Naive thymus-derived CD4-positive, alpha-beta T cell (primary cell): ENCODE measurements at regions of chr6 and their contacts with region 1.

Region 1: GRCh38 chr6:131627724-131628682 is at the start of gene MED23:
- DNase-seq: peak; percentile 85 to 98 (median 94)
- ATAC-seq: peak; percentile 99
- H3K4me3 ChIP-seq: peak within 1 kb of the TSS; percentile 92
- H3K4me3 Mint-ChIP-seq: peak within 1 kb of the TSS; percentile 95 to 100 (median 98)
- H3K27ac ChIP-seq: peak within 1 kb of the TSS; percentile 75
- H3K27ac Mint-ChIP-seq: peak within 1 kb of the TSS; percentile 93 to 96 (median 95)
- H3K4me1 ChIP-seq: peaks cover 16 to 18% of the 10 kb centered on the region in 2 donors
- H3K4me1 Mint-ChIP-seq: peaks cover 20 to 51% (median 46%) of the 10 kb centered on the region in 7 donors
- H3K27me3 ChIP-seq: no peaks in the 10 kb centered on the region
- H3K27me3 Mint-ChIP-seq: peaks cover 0 to 2% (median 0%) of the 10 kb centered on the region in 5 donors
- total RNA-seq, gene MED23: 35.7 to 59.1 (median 55.4) TPM

Region 2: DNA sequence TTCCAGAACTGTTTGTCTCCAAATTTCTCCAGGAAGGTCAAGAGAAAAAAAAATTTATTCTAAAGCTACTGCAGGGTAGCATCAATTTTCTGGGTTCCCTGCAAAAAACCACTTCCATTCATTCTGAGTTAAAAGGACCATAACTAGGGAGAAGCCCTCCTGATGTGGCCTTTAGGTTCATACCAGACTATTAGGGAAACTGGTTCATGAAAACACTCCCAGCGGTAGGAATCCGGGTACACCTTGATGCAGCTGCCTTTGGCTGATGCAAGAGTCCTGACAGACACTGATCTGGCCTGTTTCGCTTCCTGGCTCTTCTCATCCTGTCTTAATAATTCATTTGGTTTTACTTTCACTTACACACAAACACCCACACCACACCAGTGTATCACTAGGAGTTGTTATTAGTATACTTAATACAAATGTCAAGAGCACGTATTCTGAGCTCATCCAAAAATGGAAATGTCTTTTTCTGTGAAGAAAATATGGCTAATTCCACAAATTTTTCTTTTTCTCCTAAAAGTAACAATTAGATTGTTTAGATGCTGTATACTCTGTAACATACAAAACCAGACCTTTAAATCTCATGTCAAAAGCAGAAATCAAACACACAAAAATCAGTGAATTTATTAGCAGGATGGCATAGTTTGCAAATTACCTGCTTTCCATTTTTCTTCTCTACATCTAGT is 1879.6 kb before region 1 on chr6:
- CTCF ChIA-PET with region 1: no interaction called
- POLR2A ChIA-PET with region 1: no interaction called
- intact Hi-C with region 1: loop called in 1 of 2 experiments (anchors 5 kb)
- DNase-seq: peak in 8 of 9 donors; percentile 35 to 61 (median 42)
- ATAC-seq: peak; percentile 85
- H3K4me3 ChIP-seq: peak overlapping the region; percentile 43
- H3K4me3 Mint-ChIP-seq: peak overlapping the region; percentile 31 to 86 (median 79)
- H3K27ac ChIP-seq: peak overlapping the region; percentile 69
- H3K27ac Mint-ChIP-seq: peak overlapping the region; percentile 82 to 97 (median 89)
- H3K4me1 ChIP-seq: peaks cover 44 to 49% of the 10 kb centered on the region in 2 donors
- H3K4me1 Mint-ChIP-seq: peaks cover 40 to 81% (median 71%) of the 10 kb centered on the region in 7 donors
- H3K27me3 ChIP-seq: no peaks in the 10 kb centered on the region
- H3K27me3 Mint-ChIP-seq: no peaks in the 10 kb centered on the region

Region 3: GRCh38 chr6:131063028-131063763 is 564.8 kb before region 1 on chr6 and contains the start of gene EPB41L2:
- CTCF ChIA-PET with region 1: no interaction called
- POLR2A ChIA-PET with region 1: no interaction called
- intact Hi-C with region 1: loop called (anchors 1 to 2 kb)
- DNase-seq: peak; percentile 63 to 87 (median 73)
- ATAC-seq: peak; percentile 94
- H3K4me3 ChIP-seq: peak within 1 kb of the TSS; percentile 63
- H3K4me3 Mint-ChIP-seq: peak within 1 kb of the TSS; percentile 83 to 93 (median 90)
- H3K27ac ChIP-seq: peak within 1 kb of the TSS; percentile 67
- H3K27ac Mint-ChIP-seq: peak within 1 kb of the TSS; percentile 20 to 92 (median 77)
- H3K4me1 ChIP-seq: peaks cover 0 to 6% of the 10 kb centered on the region in 2 donors
- H3K4me1 Mint-ChIP-seq: peaks cover 8 to 27% (median 25%) of the 10 kb centered on the region in 7 donors
- H3K27me3 ChIP-seq: no peaks in the 10 kb centered on the region
- H3K27me3 Mint-ChIP-seq: peaks cover 0 to 35% (median 0%) of the 10 kb centered on the region in 5 donors
- total RNA-seq, gene EPB41L2: 10.3 to 26.9 (median 20.9) TPM

Region 4: DNA sequence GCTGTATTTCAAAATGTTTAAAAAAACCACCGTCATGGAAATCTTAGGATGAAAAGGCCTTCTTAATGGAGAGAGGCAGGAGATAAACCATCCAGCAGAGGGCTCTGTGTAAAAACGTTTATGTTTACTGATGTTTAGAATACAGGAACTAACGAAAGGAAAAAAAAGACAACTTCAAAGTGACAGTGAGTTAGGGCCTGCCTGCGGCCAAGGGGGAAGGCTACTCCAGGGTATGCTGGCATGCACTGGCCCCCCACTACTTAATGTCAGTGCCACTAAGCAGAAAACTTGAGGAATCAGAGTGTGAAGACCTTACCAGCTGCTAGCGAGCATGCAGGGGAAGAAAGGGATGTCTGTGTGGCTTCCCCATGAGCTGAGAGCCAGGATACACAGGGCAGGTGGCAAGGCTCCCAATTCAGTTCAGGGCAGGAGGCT is 445.0 kb before region 1 on chr6:
- CTCF ChIA-PET with region 1: interaction called, 11 read pairs
- POLR2A ChIA-PET with region 1: interaction called, 10 read pairs
- intact Hi-C with region 1: loop called (anchors 1 to 5 kb)
- DNase-seq: peak in 8 of 9 donors; percentile 6 to 57 (median 47)
- ATAC-seq: peak; percentile 83
- H3K4me3 ChIP-seq: no peak overlapping the region
- H3K4me3 Mint-ChIP-seq: peak overlapping the region; percentile 10 to 85 (median 72)
- H3K27ac ChIP-seq: no peak overlapping the region
- H3K27ac Mint-ChIP-seq: peak overlapping the region; percentile 86 to 98 (median 94)
- H3K4me1 ChIP-seq: peaks cover 0 to 8% of the 10 kb centered on the region in 2 donors
- H3K4me1 Mint-ChIP-seq: peaks cover 5 to 22% (median 17%) of the 10 kb centered on the region in 7 donors
- H3K27me3 ChIP-seq: no peaks in the 10 kb centered on the region
- H3K27me3 Mint-ChIP-seq: no peaks in the 10 kb centered on the region

Region 5: DNA sequence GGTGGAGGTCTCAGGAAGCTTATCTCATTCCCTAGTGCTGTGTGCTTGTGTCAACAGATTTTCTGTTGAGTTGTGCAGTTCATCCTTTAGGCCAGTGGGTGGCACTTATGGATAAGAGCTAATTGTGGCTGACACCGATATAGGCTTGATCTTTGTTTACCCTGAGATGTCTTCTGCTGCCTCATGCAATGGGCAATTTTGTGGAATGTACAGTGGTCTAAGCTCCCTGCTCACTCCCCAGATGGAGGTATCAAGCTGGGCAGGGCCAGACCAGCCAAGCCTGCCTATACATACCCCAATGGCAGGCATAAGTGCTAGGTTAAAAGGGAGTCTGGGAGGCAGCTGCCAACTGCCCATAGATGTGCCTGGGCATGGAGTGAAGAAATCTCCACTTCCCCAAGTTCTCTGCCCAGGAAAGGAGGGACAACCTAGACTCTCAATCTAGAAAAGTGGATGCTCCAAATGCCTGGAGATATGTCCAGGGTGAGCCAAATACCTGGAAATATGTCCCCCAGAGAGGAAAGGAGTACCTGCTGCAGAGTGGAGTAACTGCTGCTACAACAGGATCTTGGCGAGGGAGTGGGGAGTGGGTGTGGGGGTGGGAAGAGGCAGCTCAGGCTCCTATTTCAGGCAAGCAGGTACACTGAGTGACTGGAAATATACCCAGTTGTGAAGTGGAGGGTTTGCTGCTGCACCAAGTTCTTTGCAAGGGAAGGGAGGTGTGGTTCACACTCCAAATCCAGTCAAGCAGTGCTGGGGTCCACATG is 108.2 kb before region 1 on chr6:
- CTCF ChIA-PET with region 1: interaction called, 10 read pairs
- POLR2A ChIA-PET with region 1: no interaction called
- intact Hi-C with region 1: loop called (anchors 2 to 5 kb)
- DNase-seq: peak in 7 of 9 donors; percentile 38 to 64 (median 55)
- ATAC-seq: peak; percentile 92
- H3K4me3 ChIP-seq: no peak overlapping the region
- H3K4me3 Mint-ChIP-seq: no peak overlapping the region
- H3K27ac ChIP-seq: no peak overlapping the region
- H3K27ac Mint-ChIP-seq: peak overlapping the region in 6 of 9 donors; percentile 29 to 69 (median 40)
- H3K4me1 ChIP-seq: peaks cover 0 to 9% of the 10 kb centered on the region in 2 donors
- H3K4me1 Mint-ChIP-seq: peaks cover 8 to 25% (median 20%) of the 10 kb centered on the region in 7 donors
- H3K27me3 ChIP-seq: no peaks in the 10 kb centered on the region
- H3K27me3 Mint-ChIP-seq: peaks cover 0 to 8% (median 0%) of the 10 kb centered on the region in 5 donors

Region 6: GRCh38 chr6:131683479-131683878 is 55.5 kb after region 1 on chr6:
- CTCF ChIA-PET with region 1: no interaction called
- POLR2A ChIA-PET with region 1: no interaction called
- intact Hi-C with region 1: no loop called
- DNase-seq: no peak
- ATAC-seq: peak; percentile 45
- H3K4me3 ChIP-seq: no peak overlapping the region
- H3K4me3 Mint-ChIP-seq: no peak overlapping the region
- H3K27ac ChIP-seq: no peak overlapping the region
- H3K27ac Mint-ChIP-seq: no peak overlapping the region
- H3K4me1 ChIP-seq: no peaks in the 10 kb centered on the region
- H3K4me1 Mint-ChIP-seq: peaks cover 0 to 4% (median 0%) of the 10 kb centered on the region in 7 donors
- H3K27me3 ChIP-seq: no peaks in the 10 kb centered on the region
- H3K27me3 Mint-ChIP-seq: peaks cover 0 to 7% (median 0%) of the 10 kb centered on the region in 5 donors

Region 7: GRCh38 chr6:132512638-132513632 is 884.9 kb after region 1 on chr6 and contains the start of gene STX7:
- CTCF ChIA-PET with region 1: no interaction called
- POLR2A ChIA-PET with region 1: no interaction called
- intact Hi-C with region 1: loop called in 1 of 2 experiments (anchors 2 kb)
- DNase-seq: peak; percentile 77 to 90 (median 87)
- ATAC-seq: peak; percentile 95
- H3K4me3 ChIP-seq: peak within 1 kb of the TSS; percentile 78
- H3K4me3 Mint-ChIP-seq: peak within 1 kb of the TSS; percentile 89 to 99 (median 98)
- H3K27ac ChIP-seq: peak within 1 kb of the TSS; percentile 63
- H3K27ac Mint-ChIP-seq: peak within 1 kb of the TSS; percentile 81 to 95 (median 90)
- H3K4me1 ChIP-seq: peaks cover 10 to 11% of the 10 kb centered on the region in 2 donors
- H3K4me1 Mint-ChIP-seq: peaks cover 23 to 50% (median 38%) of the 10 kb centered on the region in 7 donors
- H3K27me3 ChIP-seq: no peaks in the 10 kb centered on the region
- H3K27me3 Mint-ChIP-seq: peaks cover 0 to 24% (median 0%) of the 10 kb centered on the region in 5 donors
- total RNA-seq, gene STX7: 14.7 to 43.3 (median 24.0) TPM